Posterior cingulate gyrus (tissue), 11 donors: ENCODE measurements at regions of chr10 and their contacts with region 1.

Region 1: GRCh38 chr10:57338823-57339558 is 928.7 kb downstream of the IPMK start:
- DNase-seq: no peak

Region 2: GRCh38 chr10:56586391-56587000 is 752.5 kb before region 1 on chr10:
- intact Hi-C with region 1: no loop called
- DNase-seq: peak in 3 of 10 donors; percentile 59 to 64 (median 63)

Region 3: DNA sequence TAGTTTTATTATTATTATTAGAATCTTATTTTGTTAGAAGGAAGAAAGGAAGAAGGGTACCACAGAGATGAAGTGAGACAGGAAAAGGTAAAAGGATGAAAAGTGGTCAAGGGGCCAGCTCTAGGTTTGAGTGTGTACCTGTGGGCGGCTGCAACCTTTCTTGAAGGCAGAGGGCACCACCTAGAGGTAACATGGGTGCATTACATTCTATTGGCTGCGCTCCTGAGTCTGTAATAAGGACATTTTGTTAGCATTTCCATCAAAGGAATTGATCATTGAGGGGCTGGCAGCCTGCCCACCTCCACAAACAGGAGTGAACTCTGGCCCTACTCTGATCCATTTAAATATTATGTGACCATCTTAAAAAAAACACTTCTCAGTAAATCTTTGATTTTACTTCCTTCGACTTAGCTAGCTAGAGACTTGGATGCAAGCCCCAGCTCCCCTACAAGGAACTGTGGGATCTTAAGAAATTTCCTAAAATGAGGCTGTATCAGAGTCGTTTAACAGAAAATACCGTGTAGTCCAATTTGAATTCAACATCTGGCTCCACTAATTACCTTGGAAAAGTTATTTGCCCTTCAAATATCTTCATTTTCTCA is 318.3 kb after region 1 on chr10:
- intact Hi-C with region 1: loop called (anchors 5 kb)
- DNase-seq: peak; percentile 10 to 79 (median 45)